H1 (cell line): ENCODE measurements at regions of chr1 and their contacts with region 1.

Region 1: DNA sequence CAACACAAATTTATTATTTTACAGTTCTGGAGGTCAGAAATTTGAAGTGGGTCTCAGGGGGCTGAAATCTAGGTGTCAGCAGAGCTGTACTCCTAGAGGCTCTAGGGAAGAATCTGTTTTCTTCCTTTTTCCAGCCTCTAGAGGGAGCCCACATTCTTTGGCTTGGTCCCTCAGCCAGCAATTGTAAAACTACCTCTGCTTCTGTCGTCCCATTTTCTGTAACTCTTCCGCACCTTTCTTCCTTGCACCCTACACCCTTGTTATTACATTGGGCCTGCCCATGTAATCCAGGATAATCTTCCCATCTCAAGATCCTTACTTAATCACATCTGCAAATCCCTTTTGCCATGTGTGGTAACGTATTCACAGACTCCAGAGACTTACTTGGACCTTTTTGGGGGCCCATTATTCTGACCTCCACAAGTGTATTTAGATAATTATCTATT is 24.8 kb upstream of the THEM4 start:
- DNase-seq: no peak
- H3K4me3 ChIP-seq: no peak overlapping the region
- H3K27ac ChIP-seq: no peak overlapping the region
- H3K4me1 ChIP-seq: no peaks in the 10 kb centered on the region
- H3K27me3 ChIP-seq: no peaks in the 10 kb centered on the region
- CTCF ChIP-seq: peak; percentile 16 to 90 (median 78)
- EP300 ChIP-seq: no peak
- POLR2A ChIP-seq: no peak
- RAD21 ChIP-seq: peak; percentile 94

Region 2: GRCh38 chr1:151881456-151881855 is 52.6 kb before region 1 on chr1:
- CTCF ChIA-PET with region 1: interaction called, 12 read pairs
- POLR2A ChIA-PET with region 1: no interaction called
- DNase-seq: no peak
- H3K4me3 ChIP-seq: no peak overlapping the region
- H3K27ac ChIP-seq: no peak overlapping the region
- H3K4me1 ChIP-seq: no peaks in the 10 kb centered on the region
- H3K27me3 ChIP-seq: no peaks in the 10 kb centered on the region
- CTCF ChIP-seq: peak in 2 of 3 experiments; percentile 18 to 29; a peak in 2 of 4 replicates
- EP300 ChIP-seq: no peak
- POLR2A ChIP-seq: no peak
- RAD21 ChIP-seq: peak; percentile 59 to 68

Region 3: GRCh38 chr1:151945725-151946364 is 11.8 kb after region 1 on chr1:
- CTCF ChIA-PET with region 1: interaction called, 20 read pairs
- POLR2A ChIA-PET with region 1: interaction called, 3 read pairs
- DNase-seq: peak; percentile 57 to 59
- H3K4me3 ChIP-seq: no peak overlapping the region
- H3K27ac ChIP-seq: 0 out of 2 replicates have a peak overlapping the region, but pooled peaks have one; percentile 14
- H3K4me1 ChIP-seq: peaks cover 0 to 3% (median 0%) of the 10 kb centered on the region in 4 experiments; a peak in 2 of 7 replicates
- H3K27me3 ChIP-seq: no peaks in the 10 kb centered on the region
- CTCF ChIP-seq: no peak
- EP300 ChIP-seq: peak in 1 of 2 experiments; percentile 83; a peak in 1 of 3 replicates
- POLR2A ChIP-seq: no peak; a peak in 1 of 3 replicates
- RAD21 ChIP-seq: no peak

Region 4: DNA sequence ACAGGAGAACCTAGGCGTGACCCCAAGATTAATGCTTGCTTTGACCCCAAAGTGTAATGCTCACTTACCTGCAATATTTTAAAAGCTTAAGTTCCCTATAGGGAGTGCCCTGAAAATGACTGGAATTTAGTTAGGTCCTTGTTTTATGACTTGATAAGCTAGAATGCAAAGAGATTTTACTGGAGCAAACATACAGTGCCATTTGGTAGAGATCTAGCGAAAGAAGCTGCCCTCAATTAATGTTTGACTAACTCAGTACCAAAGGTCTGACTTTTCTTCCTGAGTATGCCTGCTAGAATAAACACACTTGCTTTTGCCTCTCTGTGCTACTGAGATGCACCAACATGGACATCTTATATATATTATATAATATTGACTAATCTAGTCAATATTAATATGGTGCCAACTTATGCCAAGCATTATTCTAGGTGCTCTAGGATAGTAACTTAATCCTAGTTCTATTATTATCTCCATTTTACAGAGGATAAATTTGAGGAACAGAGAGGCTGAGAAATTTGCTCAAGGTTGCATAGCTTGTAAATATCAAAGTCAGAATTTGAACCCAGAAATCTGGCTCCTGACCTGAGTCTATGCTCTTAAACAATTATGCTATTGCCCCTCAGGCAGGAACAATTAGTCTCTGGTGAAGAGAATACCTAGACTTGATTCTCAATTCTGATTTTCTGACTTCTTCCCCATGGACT is 41.4 kb after region 1 on chr1:
- CTCF ChIA-PET with region 1: interaction called, 113 read pairs
- POLR2A ChIA-PET with region 1: no interaction called
- DNase-seq: no peak
- H3K4me3 ChIP-seq: no peak overlapping the region
- H3K27ac ChIP-seq: no peak overlapping the region
- H3K4me1 ChIP-seq: peaks cover 0 to 7% (median 3%) of the 10 kb centered on the region in 4 experiments; a peak in 3 of 7 replicates
- H3K27me3 ChIP-seq: no peaks in the 10 kb centered on the region
- CTCF ChIP-seq: no peak
- EP300 ChIP-seq: no peak
- POLR2A ChIP-seq: no peak
- RAD21 ChIP-seq: no peak

Region 5: GRCh38 chr1:151993654-151994496 is 59.8 kb after region 1 on chr1 and contains the start of gene S100A10:
- CTCF ChIA-PET with region 1: interaction called, 180 read pairs
- POLR2A ChIA-PET with region 1: no interaction called
- DNase-seq: peak in 1 of 2 experiments; percentile 73
- H3K4me3 ChIP-seq: peak within 1 kb of the TSS; percentile 69 to 90 (median 76)
- H3K27ac ChIP-seq: peak within 1 kb of the TSS; percentile 21; the same call in 1 of the 2 replicates
- H3K4me1 ChIP-seq: peaks cover 3 to 27% (median 11%) of the 10 kb centered on the region in 4 experiments
- H3K27me3 ChIP-seq: peaks cover 0 to 13% (median 6%) of the 10 kb centered on the region in 4 experiments; a peak in 4 of 7 replicates
- CTCF ChIP-seq: no peak
- EP300 ChIP-seq: no peak
- POLR2A ChIP-seq: peak in 1 of 2 experiments; percentile 42; a peak in 2 of 3 replicates
- RAD21 ChIP-seq: no peak
- total RNA-seq, gene S100A10: 231 and 233 TPM in 2 replicates

Region 6: DNA sequence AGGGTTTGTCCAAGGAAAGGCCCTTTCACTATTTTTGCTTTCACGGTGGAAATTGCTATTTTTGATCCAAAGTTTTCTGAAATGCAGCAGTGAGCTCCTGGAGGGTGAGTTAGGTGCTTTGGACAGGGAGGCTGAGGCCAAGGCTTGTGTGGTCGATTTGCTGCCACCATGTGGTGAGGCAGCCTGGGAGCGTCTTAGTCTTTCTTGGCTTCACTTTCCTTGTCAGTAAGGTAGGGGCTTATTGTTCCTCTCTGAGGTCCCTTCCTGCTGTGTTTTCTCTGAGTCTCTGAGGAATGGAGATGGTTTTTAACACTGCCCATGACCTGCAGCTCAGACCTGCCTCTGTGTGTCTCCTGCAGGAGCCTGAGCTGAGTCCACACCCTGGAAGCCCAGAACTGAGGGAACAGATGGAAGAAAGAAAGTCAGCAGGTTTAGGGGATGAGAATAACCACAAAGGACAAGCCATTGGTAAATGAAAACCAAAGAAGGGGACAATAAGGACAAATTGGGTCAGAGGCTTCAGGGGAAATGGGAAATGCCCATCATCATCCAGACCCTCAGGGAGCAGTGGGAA is 79.7 kb after region 1 on chr1:
- CTCF ChIA-PET with region 1: interaction called, 52 read pairs
- POLR2A ChIA-PET with region 1: no interaction called
- DNase-seq: peak in 1 of 2 experiments; percentile 72
- H3K4me3 ChIP-seq: no peak overlapping the region
- H3K27ac ChIP-seq: no peak overlapping the region
- H3K4me1 ChIP-seq: peaks cover 0 to 3% (median 1%) of the 10 kb centered on the region in 4 experiments; a peak in 2 of 7 replicates
- H3K27me3 ChIP-seq: no peaks in the 10 kb centered on the region
- CTCF ChIP-seq: peak; percentile 82 to 92 (median 89)
- EP300 ChIP-seq: no peak
- POLR2A ChIP-seq: no peak
- RAD21 ChIP-seq: peak; percentile 57 to 62